ENCODE measurements at regions of chr3 and their contacts with region 1.

Region 1: DNA sequence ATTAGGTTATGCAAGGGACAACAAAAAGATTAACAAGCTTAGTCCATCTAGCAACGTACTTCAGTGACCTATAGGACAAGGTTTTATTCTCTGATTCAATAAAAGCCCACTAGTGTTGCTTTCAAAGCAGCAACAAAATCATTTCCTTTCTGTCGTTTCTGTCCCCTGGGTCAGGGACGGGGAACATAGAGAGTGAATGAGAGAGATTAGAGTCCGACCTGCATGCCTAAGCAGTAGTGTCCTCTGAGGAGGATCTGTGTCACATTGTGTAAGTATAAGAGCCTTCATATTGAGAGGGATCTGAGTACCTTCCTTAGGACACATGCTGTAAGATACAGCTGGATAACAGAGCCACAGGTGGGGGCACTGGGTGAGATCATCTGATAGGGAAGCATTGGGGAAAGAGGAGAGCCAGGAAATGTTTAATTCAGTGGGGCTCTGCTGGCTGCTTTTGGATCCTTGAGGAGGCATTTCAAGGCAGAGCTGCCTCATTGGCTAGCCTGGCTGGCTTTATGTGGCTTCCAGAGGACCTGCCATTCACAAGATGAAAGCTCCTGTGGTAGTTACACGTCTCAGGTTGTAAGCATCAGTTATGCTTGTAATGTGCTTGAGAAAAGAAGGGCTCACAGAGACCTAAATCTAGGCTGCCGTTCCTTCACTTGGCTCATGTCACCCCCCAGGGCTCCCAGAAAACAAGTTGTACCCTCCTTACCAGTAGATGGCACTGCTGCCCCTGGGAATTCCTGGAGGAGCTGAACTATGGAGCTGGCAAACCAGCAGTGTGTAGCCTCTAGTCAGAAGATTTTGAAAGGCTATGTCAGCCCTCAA is 2.7 kb downstream of the TMEM108 start:
- DNase-seq: peak; percentile 63
- H3K4me3 Mint-ChIP-seq: no peak overlapping the region
- H3K27ac Mint-ChIP-seq: no peak overlapping the region
- H3K4me1 Mint-ChIP-seq: no peaks in the 10 kb centered on the region
- H3K27me3 Mint-ChIP-seq: peaks cover 40% of the 10 kb centered on the region

Region 2: DNA sequence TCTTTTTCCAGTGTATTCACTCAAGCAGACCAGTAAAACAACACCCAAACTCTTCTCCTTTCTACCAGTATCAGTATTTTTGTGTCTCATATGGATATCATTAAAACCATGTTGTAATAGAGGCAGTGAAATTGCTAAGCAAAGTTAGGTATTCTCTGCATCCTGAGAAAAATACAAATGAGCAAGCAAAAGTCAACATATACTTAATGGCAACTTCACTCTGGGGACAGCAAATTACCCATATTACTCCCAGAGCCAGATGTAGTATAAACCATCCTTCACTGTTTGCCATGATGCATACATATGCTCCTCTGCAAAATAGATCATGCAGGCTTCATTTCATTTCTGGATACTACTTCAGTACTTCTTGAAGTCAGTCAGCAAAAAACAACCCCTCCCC is 358.7 kb before region 1 on chr3:
- CTCF ChIA-PET with region 1: no interaction called
- intact Hi-C with region 1: no loop called
- DNase-seq: no peak
- H3K4me3 Mint-ChIP-seq: no peak overlapping the region
- H3K27ac Mint-ChIP-seq: no peak overlapping the region
- H3K4me1 Mint-ChIP-seq: no peaks in the 10 kb centered on the region
- H3K27me3 Mint-ChIP-seq: no peaks in the 10 kb centered on the region

Region 3: DNA sequence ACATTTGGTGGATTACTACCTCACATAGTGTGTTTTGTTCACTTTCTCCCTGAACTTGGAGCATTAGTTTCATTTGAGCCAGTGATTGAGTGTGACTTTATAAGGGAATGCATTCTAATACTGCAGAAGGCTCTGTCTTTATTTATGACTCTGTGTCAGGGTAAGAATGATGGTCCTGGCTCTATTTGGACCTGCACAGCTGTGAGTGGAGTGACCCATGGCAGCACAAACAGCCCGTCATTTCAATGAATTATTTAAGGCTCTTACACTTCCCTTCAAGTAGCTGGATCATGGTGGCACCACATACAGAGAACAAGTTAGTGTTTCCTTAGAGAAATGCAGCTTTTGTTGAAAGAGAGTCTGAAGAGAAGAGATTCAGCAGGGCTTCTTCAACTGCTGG is 13.7 kb after region 1 on chr3:
- CTCF ChIA-PET with region 1: no interaction called
- intact Hi-C with region 1: no loop called
- DNase-seq: no peak
- H3K4me3 Mint-ChIP-seq: no peak overlapping the region
- H3K27ac Mint-ChIP-seq: no peak overlapping the region
- H3K4me1 Mint-ChIP-seq: no peaks in the 10 kb centered on the region
- H3K27me3 Mint-ChIP-seq: peaks cover 4% of the 10 kb centered on the region

Region 4: DNA sequence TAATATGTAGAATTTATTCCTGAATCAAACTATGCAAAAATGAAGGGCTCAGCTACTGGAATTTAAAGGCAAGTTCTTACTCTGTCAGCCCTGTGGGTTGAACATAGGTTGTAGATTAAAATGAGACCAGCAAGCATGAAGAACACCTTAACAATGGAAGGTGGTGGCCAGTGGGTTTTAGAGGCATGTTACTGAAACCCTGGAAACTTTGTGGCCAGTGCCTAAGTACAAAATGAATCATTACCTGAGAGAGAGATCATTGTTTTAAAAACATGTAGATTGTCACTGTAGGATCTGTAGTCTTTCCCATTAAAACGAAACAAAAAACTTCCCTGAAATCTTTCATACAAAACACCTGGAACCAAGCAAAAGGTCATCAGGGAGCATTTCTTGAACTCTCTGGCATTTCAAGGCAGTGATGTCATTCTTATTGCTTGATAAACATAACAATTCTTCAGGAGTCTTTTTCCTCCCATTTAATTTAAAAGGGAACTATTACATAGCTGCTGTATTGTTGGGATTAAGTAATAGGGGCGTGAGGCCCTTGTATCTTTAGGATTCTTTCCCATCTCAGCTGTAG is 49.1 kb after region 1 on chr3:
- CTCF ChIA-PET with region 1: no interaction called
- intact Hi-C with region 1: no loop called
- DNase-seq: no peak
- H3K4me3 Mint-ChIP-seq: no peak overlapping the region
- H3K27ac Mint-ChIP-seq: no peak overlapping the region
- H3K4me1 Mint-ChIP-seq: no peaks in the 10 kb centered on the region
- H3K27me3 Mint-ChIP-seq: peaks cover 2% of the 10 kb centered on the region

Region 5: GRCh38 chr3:133256787-133257483 is 216.0 kb after region 1 on chr3:
- CTCF ChIA-PET with region 1: no interaction called
- intact Hi-C with region 1: no loop called
- DNase-seq: no peak
- H3K4me3 Mint-ChIP-seq: no peak overlapping the region
- H3K27ac Mint-ChIP-seq: no peak overlapping the region
- H3K4me1 Mint-ChIP-seq: no peaks in the 10 kb centered on the region
- H3K27me3 Mint-ChIP-seq: peaks cover 10% of the 10 kb centered on the region

Region 6: GRCh38 chr3:133377396-133377795 is 336.5 kb after region 1 on chr3:
- CTCF ChIA-PET with region 1: interaction called, 6 read pairs
- intact Hi-C with region 1: loop called (anchors 2 kb)
- DNase-seq: no peak
- H3K4me3 Mint-ChIP-seq: no peak overlapping the region
- H3K27ac Mint-ChIP-seq: no peak overlapping the region
- H3K4me1 Mint-ChIP-seq: no peaks in the 10 kb centered on the region
- H3K27me3 Mint-ChIP-seq: no peaks in the 10 kb centered on the region

Region 7: GRCh38 chr3:133384331-133385027 is 343.6 kb after region 1 on chr3:
- CTCF ChIA-PET with region 1: no interaction called
- intact Hi-C with region 1: loop called (anchors 2 kb)
- DNase-seq: peak; percentile 65
- H3K4me3 Mint-ChIP-seq: no peak overlapping the region
- H3K27ac Mint-ChIP-seq: no peak overlapping the region
- H3K4me1 Mint-ChIP-seq: no peaks in the 10 kb centered on the region
- H3K27me3 Mint-ChIP-seq: no peaks in the 10 kb centered on the region

Region 8: DNA sequence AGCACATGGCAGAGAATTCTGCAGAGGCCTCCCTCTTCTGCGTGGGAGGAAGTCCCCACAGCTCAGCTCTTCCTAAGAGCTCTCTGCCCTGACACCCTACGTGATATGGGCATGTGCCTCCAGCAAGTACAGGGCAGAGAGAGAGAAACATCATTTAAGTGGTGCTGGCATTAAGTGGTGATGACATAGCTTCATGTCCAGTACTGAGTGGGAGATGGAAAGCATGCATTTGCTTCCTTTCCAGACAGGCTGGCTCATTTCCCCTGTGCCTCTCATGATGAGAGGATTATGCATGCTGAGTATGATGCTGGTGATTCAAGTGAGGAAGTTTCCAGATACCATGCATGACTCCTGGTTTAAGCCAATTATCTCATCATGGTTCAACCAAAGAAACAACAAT is 385.8 kb after region 1 on chr3:
- CTCF ChIA-PET with region 1: interaction called, 5 read pairs
- intact Hi-C with region 1: loop called (anchors 1 kb)
- DNase-seq: no peak
- H3K4me3 Mint-ChIP-seq: no peak overlapping the region
- H3K27ac Mint-ChIP-seq: no peak overlapping the region
- H3K4me1 Mint-ChIP-seq: peaks cover 4% of the 10 kb centered on the region
- H3K27me3 Mint-ChIP-seq: no peaks in the 10 kb centered on the region